PC-3 (cell line): ENCODE measurements at regions of chr1 and their contacts with region 1.

Region 1: DNA sequence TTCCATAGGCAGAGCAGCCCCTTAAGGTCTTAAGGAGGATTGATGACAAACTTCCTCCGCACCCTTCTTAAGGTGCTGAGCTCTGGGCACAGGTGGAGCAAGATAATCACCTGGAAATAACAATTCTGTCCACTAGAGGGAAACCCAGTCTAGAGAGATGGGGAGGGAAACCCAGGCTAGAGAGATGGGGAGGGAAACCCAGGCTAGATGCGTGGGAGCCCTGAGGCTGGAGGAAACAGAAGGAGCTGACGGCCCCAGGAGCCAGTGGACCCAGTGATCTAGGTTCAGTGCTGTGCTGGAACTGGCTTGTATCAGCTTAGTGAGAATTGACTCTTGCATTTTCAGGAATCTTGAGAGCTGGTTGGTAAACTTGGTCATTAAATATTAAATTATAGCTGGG is 17.8 kb upstream of the MYCL start:
- DNase-seq: peak; percentile 93
- ATAC-seq: peak; percentile 97
- H3K4me3 ChIP-seq: no peak overlapping the region
- H3K27ac ChIP-seq: no peak overlapping the region
- H3K4me1 ChIP-seq: no peaks in the 10 kb centered on the region
- H3K27me3 ChIP-seq: no peaks in the 10 kb centered on the region
- CTCF ChIP-seq: peak; percentile 83

Region 2: GRCh38 chr1:39738622-39739366 is 180.8 kb before region 1 on chr1 and contains the start of gene PPIE:
- CTCF ChIA-PET with region 1: no interaction called
- POLR2A ChIA-PET with region 1: no interaction called
- intact Hi-C with region 1: no loop called
- DNase-seq: peak; percentile 82
- ATAC-seq: peak; percentile 98
- H3K4me3 ChIP-seq: peak within 1 kb of the TSS; percentile 92
- H3K27ac ChIP-seq: no peak within 1 kb of the TSS
- H3K4me1 ChIP-seq: peaks cover 11% of the 10 kb centered on the region
- H3K27me3 ChIP-seq: no peaks in the 10 kb centered on the region
- CTCF ChIP-seq: no peak
- total RNA-seq, gene PPIE: 45.1 and 53.6 TPM in 2 replicates

Region 3: GRCh38 chr1:39901698-39902459 is 17.7 kb before region 1 on chr1 and contains the start of gene MYCL:
- CTCF ChIA-PET with region 1: interaction called, 11 read pairs
- POLR2A ChIA-PET with region 1: no interaction called
- intact Hi-C with region 1: no loop called
- DNase-seq: peak; percentile 94
- ATAC-seq: peak; percentile 87
- H3K4me3 ChIP-seq: peak within 1 kb of the TSS; percentile 86
- H3K27ac ChIP-seq: 0 out of 2 replicates have a peak within 1 kb of the TSS, but pooled peaks have one; percentile 10
- H3K4me1 ChIP-seq: peaks cover 7% of the 10 kb centered on the region; the same call in 1 of the 2 replicates
- H3K27me3 ChIP-seq: no peaks in the 10 kb centered on the region
- CTCF ChIP-seq: peak; percentile 87
- total RNA-seq, gene MYCL: 4.0 and 6.6 TPM in 2 replicates

Region 4: GRCh38 chr1:39973503-39974135 is 54.1 kb after region 1 on chr1:
- CTCF ChIA-PET with region 1: interaction called, 8 read pairs
- POLR2A ChIA-PET with region 1: no interaction called
- intact Hi-C with region 1: loop called (anchors 1 kb)
- DNase-seq: peak; percentile 78
- ATAC-seq: peak; percentile 86
- H3K4me3 ChIP-seq: peak overlapping the region; percentile 45; the same call in 1 of the 2 replicates
- H3K27ac ChIP-seq: no peak overlapping the region
- H3K4me1 ChIP-seq: no peaks in the 10 kb centered on the region
- H3K27me3 ChIP-seq: no peaks in the 10 kb centered on the region
- CTCF ChIP-seq: peak; percentile 98

Region 5: DNA sequence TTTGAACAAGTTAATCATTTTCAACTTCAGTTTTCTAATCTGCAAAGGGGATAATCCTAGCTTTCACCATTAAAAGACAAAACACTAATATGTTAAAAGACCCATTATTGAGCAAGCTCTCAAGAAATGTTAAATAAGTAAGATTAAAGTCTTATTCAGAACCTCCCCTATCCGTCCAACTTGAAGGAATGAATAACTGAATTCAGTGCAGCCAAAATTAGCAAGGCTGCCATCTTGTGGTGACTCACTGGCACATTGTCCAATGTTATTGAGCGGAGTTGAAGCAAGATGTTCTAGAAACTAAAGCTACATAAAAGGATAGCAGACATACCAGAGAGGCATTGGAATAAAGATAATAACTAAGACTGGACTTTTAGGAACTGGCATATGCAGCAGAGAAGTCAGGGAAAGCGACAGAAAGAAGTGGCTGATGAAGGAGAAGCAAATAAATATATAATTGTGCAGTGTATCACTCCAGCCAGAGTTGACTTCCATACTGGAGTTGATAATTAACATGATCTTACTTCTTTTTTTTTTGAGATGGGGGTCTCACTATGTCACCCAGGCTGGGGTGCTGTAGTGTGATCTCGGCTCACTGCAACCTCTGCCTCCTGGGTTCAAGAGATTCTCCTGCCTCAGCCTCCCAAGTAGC is 112.8 kb after region 1 on chr1:
- CTCF ChIA-PET with region 1: interaction called, 19 read pairs
- POLR2A ChIA-PET with region 1: interaction called, 10 read pairs
- intact Hi-C with region 1: no loop called
- DNase-seq: peak; percentile 71
- ATAC-seq: peak; percentile 79
- H3K4me3 ChIP-seq: no peak overlapping the region
- H3K27ac ChIP-seq: no peak overlapping the region
- H3K4me1 ChIP-seq: peaks cover 21% of the 10 kb centered on the region
- H3K27me3 ChIP-seq: no peaks in the 10 kb centered on the region
- CTCF ChIP-seq: peak; percentile 89